ENCODE measurements at regions of chr20 and their contacts with region 1.

Region 1: DNA sequence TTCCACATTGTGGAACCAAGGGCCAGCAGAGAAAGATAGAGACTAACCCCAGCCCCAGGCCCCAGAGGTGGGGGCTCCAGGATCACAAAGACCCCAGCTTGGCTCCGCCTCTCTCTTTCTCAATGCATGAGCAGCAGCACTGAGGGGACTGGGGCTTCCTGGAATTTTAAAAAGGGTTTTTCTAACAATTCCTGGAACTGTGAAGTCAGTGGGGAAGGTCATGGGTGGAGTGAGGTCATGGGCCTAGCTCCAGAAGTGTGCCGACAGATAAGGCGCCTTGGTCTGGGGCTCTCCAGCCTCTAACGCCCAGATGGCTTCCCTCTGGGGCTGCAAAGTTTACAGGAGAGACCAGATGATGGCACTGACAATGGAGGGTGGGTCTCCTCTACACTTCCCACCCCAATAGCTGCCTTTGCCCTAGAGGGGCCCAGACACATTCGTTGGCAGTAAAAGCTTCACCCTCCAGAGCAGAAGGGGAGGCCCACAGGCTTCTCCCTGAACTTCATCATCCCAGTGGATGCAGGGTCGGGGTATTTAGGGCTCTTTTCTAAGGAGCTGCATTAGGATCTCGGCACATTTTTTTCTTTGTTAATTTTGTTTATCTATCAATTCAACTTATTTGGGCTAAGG is 46.9 kb upstream of the CD93 start:
- DNase-seq: peak; percentile 82 to 96 (median 84)
- ATAC-seq: peak; percentile 77
- H3K4me3 ChIP-seq: peak overlapping the region; percentile 1; the same call in 1 of the 2 replicates
- H3K27ac ChIP-seq: peak overlapping the region; percentile 100
- H3K4me1 ChIP-seq: peaks cover 58 to 63% of the 10 kb centered on the region in 2 experiments
- H3K27me3 ChIP-seq: no peaks in the 10 kb centered on the region
- CTCF ChIP-seq: no peak
- EP300 ChIP-seq: peak; percentile 97
- POLR2A ChIP-seq: peak; percentile 3; the same call in 1 of the 2 replicates
- RAD21 ChIP-seq: no peak; a peak in 1 of 4 replicates

Region 2: GRCh38 chr20:22411627-22412450 is 721.2 kb before region 1 on chr20:
- CTCF ChIA-PET with region 1: no interaction called
- POLR2A ChIA-PET with region 1: no interaction called
- in situ Hi-C with region 1: no loop called
- intact Hi-C with region 1: loop called (anchors 5 kb)
- DNase-seq: peak; percentile 69 to 89 (median 75)
- ATAC-seq: peak; percentile 91
- H3K4me3 ChIP-seq: no peak overlapping the region
- H3K27ac ChIP-seq: peak overlapping the region; percentile 98
- H3K4me1 ChIP-seq: peaks cover 15 to 63% of the 10 kb centered on the region in 2 experiments
- H3K27me3 ChIP-seq: no peaks in the 10 kb centered on the region
- CTCF ChIP-seq: no peak
- EP300 ChIP-seq: peak; percentile 89
- POLR2A ChIP-seq: peak; percentile 71
- RAD21 ChIP-seq: peak; percentile 26 to 28; a peak in 3 of 4 replicates

Region 3: GRCh38 chr20:22700367-22700766 is 432.7 kb before region 1 on chr20:
- CTCF ChIA-PET with region 1: no interaction called
- POLR2A ChIA-PET with region 1: no interaction called
- in situ Hi-C with region 1: no loop called
- intact Hi-C with region 1: no loop called
- DNase-seq: no peak
- ATAC-seq: no peak
- H3K4me3 ChIP-seq: no peak overlapping the region
- H3K27ac ChIP-seq: no peak overlapping the region
- H3K4me1 ChIP-seq: no peaks in the 10 kb centered on the region
- H3K27me3 ChIP-seq: no peaks in the 10 kb centered on the region; a peak in 1 of 5 replicates
- CTCF ChIP-seq: no peak
- EP300 ChIP-seq: no peak
- POLR2A ChIP-seq: no peak
- RAD21 ChIP-seq: no peak

Region 4: DNA sequence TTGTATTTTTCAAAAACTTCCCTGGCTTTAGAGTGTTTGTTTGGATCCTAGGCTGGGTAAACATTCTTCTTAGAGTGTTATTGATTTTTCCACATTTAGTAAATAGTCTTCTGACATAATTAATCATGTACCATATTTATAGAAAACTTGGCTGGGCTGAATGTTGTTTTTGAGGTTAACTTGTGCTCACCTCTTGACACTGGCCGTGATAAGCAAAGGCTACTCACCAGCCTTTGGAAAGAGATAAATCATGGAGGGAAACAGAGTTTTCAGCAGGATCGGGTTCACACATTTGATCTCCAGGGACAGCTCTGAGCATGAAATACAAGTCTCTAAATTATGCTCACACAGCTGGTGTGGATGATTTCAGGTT is 40.7 kb before region 1 on chr20:
- CTCF ChIA-PET with region 1: no interaction called
- POLR2A ChIA-PET with region 1: interaction called, 5 read pairs
- in situ Hi-C with region 1: no loop called
- intact Hi-C with region 1: loop called (anchors 5 kb)
- DNase-seq: peak; percentile 34 to 79 (median 52)
- ATAC-seq: peak; percentile 76
- H3K4me3 ChIP-seq: no peak overlapping the region
- H3K27ac ChIP-seq: peak overlapping the region; percentile 45; the same call in 2 of the 3 replicates
- H3K4me1 ChIP-seq: peaks cover 31 to 35% of the 10 kb centered on the region in 2 experiments
- H3K27me3 ChIP-seq: no peaks in the 10 kb centered on the region
- CTCF ChIP-seq: no peak
- EP300 ChIP-seq: peak; percentile 48; the same call in 1 of the 2 replicates
- POLR2A ChIP-seq: no peak
- RAD21 ChIP-seq: no peak

Region 5: DNA sequence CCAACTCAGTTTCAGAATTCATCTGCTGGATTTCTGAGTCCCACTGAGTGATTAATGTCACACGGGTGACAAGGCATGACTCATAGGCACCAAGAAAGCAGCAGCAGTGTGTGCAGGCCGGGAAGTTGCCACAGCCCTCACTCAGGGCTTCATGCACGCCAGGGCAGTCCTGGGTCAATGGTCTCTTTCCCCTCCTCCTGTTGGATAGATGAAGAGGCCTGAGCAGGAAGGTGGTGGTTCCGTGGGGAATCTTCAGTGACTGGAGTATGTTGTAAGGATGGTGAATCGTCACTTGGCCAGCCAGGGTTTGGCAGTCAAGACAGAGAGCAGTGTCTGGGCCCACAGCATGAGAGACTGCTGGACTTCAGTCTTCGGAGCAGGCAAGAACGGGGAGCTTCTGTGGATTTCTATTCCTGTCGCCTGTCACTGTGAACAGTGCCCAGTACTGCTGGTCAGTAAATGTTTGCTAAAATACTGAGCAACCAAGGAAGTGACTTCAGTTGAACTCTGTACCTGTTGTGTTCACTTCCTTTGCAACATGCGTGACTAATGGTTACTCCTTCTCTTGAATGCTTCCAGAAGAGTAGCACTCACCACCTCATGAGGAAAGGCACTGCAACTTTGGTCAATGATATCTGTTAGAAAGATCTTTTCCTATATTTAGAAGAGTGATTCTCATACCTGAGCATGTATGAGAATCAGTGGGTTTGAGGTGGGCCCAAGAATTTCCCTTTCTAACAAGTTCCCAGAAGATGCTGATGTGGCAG is 15.1 kb after region 1 on chr20:
- CTCF ChIA-PET with region 1: no interaction called
- POLR2A ChIA-PET with region 1: interaction called, 109 read pairs
- in situ Hi-C with region 1: no loop called
- intact Hi-C with region 1: loop called (anchors 2 kb)
- DNase-seq: peak; percentile 61 to 92 (median 70)
- ATAC-seq: peak; percentile 84
- H3K4me3 ChIP-seq: peak overlapping the region; percentile 46
- H3K27ac ChIP-seq: peak overlapping the region; percentile 99
- H3K4me1 ChIP-seq: peaks cover 64 to 94% of the 10 kb centered on the region in 2 experiments
- H3K27me3 ChIP-seq: no peaks in the 10 kb centered on the region
- CTCF ChIP-seq: no peak
- EP300 ChIP-seq: peak; percentile 90
- POLR2A ChIP-seq: peak; percentile 95
- RAD21 ChIP-seq: peak in 1 of 2 experiments; percentile 32; a peak in 2 of 4 replicates

Region 6: DNA sequence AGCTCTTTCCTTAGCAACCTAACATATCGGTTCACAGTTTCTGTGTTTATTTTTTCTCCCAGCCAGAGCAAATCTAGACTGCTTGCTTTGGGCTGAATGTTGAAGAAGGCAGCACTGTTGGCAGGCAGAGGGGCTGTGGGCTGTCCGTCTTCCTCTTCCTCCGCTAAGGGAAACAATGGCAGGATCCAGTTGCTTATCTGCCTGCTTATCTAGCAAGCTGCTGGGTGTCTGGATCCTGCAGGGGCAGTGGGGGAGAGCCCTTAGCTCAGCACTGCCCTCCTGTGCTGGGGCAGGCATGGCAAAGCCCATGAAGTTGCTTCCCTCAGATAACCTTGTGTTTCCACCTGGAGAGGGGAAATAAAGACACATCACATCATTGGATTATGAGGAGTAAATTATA is 45.8 kb after region 1 on chr20:
- CTCF ChIA-PET with region 1: no interaction called
- POLR2A ChIA-PET with region 1: no interaction called
- in situ Hi-C with region 1: no loop called
- intact Hi-C with region 1: loop called (anchors 5 kb)
- DNase-seq: peak; percentile 53 to 65 (median 63)
- ATAC-seq: peak; percentile 84
- H3K4me3 ChIP-seq: no peak overlapping the region
- H3K27ac ChIP-seq: 0 out of 3 replicates have a peak overlapping the region, but pooled peaks have one; percentile 28
- H3K4me1 ChIP-seq: peaks cover 20 to 27% of the 10 kb centered on the region in 2 experiments; a peak in 4 of 5 replicates
- H3K27me3 ChIP-seq: no peaks in the 10 kb centered on the region
- CTCF ChIP-seq: peak; percentile 65 to 71 (median 70)
- EP300 ChIP-seq: 0 out of 2 replicates have a peak, but pooled peaks have one; percentile 32
- POLR2A ChIP-seq: no peak
- RAD21 ChIP-seq: peak; percentile 80 to 85

Region 7: DNA sequence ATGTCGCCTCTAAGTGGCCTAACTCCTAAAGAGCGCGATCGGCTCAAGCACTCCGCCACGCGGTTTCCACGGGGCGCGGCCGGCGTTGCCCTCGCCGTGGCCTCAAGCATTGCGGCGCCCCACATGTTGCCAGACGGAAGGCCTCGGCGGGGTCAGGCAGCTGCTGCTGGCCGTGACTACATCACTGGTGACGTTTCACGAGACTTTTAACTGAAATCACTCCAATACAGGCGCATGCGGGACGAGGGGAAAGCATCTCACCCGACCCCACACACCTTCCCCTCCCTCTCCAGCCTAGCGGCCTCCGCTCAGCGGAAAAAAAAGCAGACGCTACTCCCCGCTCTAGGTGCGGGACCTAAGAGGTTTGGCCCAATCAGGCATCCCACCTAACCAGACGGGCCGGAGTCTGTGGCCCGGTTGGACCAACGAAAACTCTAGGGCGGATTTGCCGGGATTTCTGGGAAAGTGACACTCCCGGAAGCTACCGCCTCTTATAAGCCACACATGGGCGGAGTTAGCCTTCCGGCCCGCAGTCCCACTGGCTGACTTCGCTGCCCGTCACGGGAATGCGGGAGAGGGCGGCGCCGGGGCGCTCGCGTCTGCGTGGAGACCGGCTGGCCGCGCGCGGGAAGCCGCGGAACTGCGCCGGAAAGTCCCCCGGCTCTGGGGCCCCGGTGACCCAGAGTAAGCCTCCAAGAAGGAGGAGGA is 217.3 kb after region 1 on chr20 and contains the start of gene NXT1:
- CTCF ChIA-PET with region 1: no interaction called
- POLR2A ChIA-PET with region 1: no interaction called
- in situ Hi-C with region 1: no loop called
- intact Hi-C with region 1: no loop called
- DNase-seq: peak; percentile 79 to 95 (median 86)
- ATAC-seq: peak; percentile 97
- H3K4me3 ChIP-seq: peak within 1 kb of the TSS; percentile 95
- H3K27ac ChIP-seq: peak within 1 kb of the TSS; percentile 95
- H3K4me1 ChIP-seq: peaks cover 9 to 12% of the 10 kb centered on the region in 2 experiments; a peak in 4 of 5 replicates
- H3K27me3 ChIP-seq: no peaks in the 10 kb centered on the region
- CTCF ChIP-seq: peak in 2 of 3 experiments; percentile 5; a peak in 2 of 6 replicates
- EP300 ChIP-seq: no peak
- POLR2A ChIP-seq: peak; percentile 82
- RAD21 ChIP-seq: no peak
- polyA plus RNA-seq, gene NXT1: 7.7 to 8.9 TPM